Right ventricle myocardium inferior (tissue), 1 donor: ENCODE measurements at regions of chr2 and their contacts with region 1.

Region 1: GRCh38 chr2:28392297-28393113 is at the start of gene FOSL2:
- DNase-seq: peak; percentile 97
- ATAC-seq: peak; percentile 76
- total RNA-seq, gene FOSL2: 48.5 TPM

Region 2: GRCh38 chr2:27715318-27716210 is 676.9 kb before region 1 on chr2:
- intact Hi-C with region 1: loop called (anchors 5 kb)
- DNase-seq: no peak
- ATAC-seq: peak; percentile 88

Region 3: DNA sequence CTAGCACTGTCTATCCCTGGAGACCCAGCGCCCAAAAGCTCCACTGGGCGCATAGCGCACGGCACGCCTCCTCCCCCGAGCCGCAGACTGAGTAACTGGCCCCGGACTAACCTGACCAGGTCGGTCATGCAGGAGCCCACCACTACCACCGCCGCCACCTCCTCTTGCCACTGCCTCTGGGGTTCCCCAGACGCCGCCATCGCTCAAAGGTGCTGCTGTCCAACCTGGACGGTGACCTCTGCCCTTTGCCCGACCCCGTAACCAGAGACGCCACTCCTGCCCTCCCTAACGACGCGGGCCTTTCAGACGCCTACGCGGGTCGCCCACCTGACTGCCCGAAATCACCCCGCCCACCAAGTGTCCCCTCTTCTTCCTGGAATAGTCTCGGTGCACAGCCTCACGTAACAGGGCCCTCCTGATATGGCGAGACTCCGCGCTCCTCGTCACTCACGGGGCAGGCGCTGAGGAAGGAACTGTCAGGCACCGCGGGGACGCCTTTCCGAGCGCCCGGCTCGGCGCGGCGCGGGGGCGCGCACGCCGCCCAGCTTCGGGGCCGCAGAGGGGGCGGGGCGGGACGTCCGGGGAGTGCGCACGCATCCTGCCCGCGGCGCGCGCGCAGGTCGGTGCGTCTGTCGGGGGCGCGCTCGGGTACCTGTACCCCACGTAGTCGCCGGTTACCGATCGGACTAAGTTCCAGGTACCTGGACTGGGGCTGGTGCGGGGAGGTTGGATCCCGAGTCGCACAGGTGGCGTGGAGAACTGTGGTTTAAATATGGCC is 502.2 kb before region 1 on chr2 and contains the starts of genes BABAM2 and RBKS:
- intact Hi-C with region 1: loop called (anchors 1 kb)
- DNase-seq: peak; percentile 92
- ATAC-seq: peak; percentile 97
- total RNA-seq, gene BABAM2: 53.0 TPM
- total RNA-seq, gene RBKS: 4.0 TPM

Region 4: GRCh38 chr2:27954771-27955383 is 437.6 kb before region 1 on chr2:
- intact Hi-C with region 1: loop called (anchors 2 kb)
- DNase-seq: no peak
- ATAC-seq: peak; percentile 86

Region 5: DNA sequence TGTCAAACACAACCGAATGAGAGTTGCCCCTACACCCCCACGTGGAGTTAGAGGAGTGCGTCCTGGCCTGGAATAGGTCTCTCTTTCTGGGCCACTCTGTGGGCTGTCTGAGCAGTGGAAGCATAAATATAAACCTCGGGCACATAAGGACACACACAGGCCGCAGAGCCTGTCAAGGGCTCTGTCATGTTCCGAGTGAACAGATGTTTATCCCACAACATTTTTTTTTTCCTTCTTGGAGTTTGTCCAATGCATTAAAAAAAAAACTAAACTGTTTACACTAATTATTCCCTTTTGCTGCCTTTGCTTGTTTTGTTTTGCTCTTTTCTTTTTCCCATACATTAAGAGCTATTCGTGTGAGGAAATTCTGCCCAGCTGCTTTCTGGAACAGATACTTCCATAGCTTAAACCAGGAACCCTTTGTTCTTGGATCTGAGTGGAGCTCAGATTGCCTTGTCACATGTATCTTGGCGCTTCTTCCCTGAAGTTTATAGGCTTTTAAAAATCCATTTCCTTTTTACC is 228.2 kb before region 1 on chr2:
- intact Hi-C with region 1: loop called (anchors 2 kb)
- DNase-seq: peak; percentile 57
- ATAC-seq: peak; percentile 95

Region 6: DNA sequence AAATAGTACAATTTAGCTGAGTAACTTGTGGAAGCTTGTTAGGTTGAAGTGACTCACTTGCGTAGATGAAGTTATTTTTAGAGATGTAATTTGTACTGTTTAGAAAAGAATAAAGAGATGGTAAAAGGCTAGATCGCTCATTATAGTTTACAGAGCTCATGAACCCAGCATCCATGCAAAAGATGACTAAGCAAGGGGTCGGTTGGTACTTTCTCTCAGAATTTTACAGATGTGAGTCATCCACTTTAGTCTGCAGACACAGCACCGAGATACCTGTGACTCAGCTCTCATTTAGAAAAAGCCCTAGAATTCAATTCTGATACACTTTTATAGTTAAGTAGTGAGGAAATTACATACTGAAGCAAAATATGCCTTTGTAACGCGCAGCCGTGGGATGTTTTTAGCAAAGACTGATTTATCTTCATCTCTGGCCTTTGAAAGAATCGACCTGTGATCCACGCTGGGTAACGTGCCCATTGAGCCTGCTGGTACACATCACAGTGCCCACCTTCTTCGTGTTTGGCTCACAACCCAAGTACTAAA is 116.4 kb before region 1 on chr2:
- intact Hi-C with region 1: loop called (anchors 5 kb)
- DNase-seq: no peak
- ATAC-seq: no peak

Region 7: DNA sequence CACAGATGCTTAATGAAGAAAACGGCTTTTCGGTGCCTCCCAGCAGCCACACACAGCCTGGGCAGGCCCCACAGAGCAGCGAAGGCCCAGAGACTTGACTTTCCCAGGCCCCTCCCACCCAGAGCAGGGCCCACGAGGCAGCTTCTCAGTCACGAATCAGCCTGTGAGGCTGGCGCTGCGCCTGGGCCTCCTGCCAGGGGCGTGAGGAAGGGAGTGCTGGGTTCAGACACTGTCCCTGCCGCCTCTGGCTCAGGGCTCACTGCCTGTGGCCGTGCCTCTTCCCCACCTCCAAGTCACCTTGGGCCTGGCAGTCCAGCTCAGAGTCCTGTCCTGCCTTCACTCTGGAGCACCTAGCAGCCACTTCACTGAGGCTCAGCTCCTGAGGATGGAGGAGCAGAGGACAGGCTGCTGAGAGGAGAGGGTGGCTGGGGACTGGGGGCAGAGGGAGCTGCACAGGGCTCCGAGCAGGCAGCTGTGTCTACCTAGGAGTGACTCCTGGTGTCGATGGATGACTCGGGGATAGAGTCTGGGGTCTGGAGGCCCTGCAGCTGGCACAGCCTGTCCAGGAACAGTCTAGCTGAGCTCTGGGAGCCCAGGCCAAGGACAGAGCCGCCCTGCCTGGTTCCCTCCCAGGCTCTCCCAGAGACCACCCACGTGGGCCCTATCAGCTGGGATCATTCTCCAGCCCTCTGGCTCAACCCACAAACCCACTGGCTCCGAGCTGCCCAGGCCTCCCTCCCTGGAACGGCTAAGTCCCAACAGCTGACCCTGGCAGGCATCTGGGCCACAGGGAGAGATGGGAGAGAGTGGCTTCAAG is 36.2 kb before region 1 on chr2:
- intact Hi-C with region 1: loop called (anchors 1 kb)
- DNase-seq: peak; percentile 96
- ATAC-seq: peak; percentile 92

Region 8: DNA sequence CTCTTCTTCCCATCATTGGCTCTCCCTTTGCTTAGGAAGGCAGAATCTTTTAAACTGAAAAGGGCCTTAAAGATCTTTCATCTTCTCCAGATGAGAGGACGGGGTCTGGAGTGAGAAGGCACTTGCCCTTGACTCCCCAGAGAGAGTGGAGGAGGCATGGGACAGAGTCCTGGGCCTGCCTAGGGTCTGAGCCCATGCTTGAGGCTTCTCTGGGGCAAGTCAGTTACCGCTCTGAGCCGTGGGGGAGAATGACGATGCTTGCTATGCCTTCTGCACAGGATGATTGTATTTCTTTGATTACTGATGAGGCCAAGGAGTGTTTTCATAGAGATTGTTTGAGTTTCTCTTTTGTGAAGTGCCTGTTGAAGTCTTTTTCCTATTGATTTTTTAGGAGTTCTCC is 104.3 kb after region 1 on chr2:
- intact Hi-C with region 1: no loop called
- DNase-seq: no peak
- ATAC-seq: no peak